CD4-positive, alpha-beta T cell (primary cell): ENCODE measurements at regions of chr15 and their contacts with region 1.

Region 1: DNA sequence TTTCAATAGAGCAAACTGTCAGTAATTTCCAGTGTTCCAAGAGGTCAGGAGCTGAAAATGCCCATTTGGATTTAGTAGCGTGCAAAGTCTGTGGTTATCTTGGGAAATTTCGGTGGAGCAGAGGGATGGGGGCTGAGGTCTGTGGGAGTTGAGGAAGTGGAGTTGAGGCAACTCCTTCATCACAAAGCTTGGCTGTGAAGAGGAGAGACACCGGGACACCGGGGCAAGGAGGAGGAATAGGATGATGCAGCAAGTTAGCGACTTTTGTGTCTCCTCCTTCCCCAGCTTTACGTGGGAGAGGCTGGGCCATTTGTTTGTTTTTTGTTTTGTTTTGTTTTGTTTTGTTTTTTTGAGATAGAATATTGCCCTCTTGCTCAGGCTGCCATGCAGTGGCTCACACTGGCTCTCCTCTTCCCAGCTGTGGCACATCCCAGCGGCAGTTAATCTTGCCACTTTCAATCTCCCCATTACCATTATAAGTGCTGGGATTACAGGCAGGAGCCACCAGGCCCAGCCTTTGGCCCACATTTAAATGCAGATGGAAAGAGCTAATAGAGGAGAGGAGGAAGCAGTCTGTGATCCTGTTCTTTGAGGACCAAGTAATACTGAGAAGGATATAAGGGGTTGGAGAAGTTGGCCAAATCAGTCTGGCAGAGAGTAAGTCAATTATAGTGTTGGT is 47.1 kb downstream of the CRTC3 start:
- DNase-seq: no peak
- ATAC-seq: no peak
- H3K4me3 ChIP-seq: no peak overlapping the region
- H3K4me3 Mint-ChIP-seq: no peak overlapping the region
- H3K27ac ChIP-seq: no peak overlapping the region
- H3K27ac Mint-ChIP-seq: peak overlapping the region; percentile 77
- H3K4me1 ChIP-seq: peaks cover 61% of the 10 kb centered on the region
- H3K4me1 Mint-ChIP-seq: peaks cover 80% of the 10 kb centered on the region
- H3K27me3 ChIP-seq: no peaks in the 10 kb centered on the region
- H3K27me3 Mint-ChIP-seq: no peaks in the 10 kb centered on the region
- CTCF ChIP-seq: no peak

Region 2: DNA sequence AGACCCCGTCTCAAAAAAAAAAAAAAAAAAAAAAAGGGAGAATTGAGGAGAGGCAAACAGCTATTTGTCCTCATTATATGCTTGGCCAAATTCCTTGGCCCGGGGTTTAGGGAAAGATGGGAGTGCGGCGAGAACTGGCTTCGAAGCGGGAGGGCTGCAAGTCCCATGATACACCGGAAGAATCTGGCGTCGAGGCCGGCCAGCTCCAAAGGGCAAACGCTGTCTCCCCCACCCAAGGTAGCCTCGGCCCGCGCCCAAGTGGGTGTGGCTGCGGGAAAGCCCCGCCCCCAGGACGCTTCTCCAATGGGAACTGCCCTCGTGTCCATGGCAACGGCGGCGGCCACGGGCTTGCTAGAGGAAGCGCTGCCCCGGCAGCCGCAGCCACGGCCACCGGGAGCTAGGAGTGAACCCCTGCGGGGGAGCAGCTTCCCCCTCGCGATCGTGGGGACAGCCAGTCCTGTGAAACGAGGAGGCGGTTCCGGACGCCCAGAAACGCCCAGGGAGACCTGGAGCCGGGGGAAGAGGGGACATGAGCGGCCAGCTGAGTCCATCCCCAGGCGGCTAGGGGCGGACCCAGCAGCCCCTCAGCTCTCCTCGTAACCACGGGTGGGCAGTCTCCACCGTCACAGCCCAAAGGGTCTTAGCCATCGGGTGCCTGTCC is 327.5 kb before region 1 on chr15 and contains the start of gene TTLL13:
- CTCF ChIA-PET with region 1: no interaction called
- POLR2A ChIA-PET with region 1: no interaction called
- intact Hi-C with region 1: no loop called
- DNase-seq: peak; percentile 33 to 87 (median 60)
- ATAC-seq: peak; percentile 70
- H3K4me3 ChIP-seq: peak within 1 kb of the TSS; percentile 61
- H3K4me3 Mint-ChIP-seq: peak within 1 kb of the TSS; percentile 76
- H3K27ac ChIP-seq: no peak within 1 kb of the TSS
- H3K27ac Mint-ChIP-seq: peak within 1 kb of the TSS; percentile 63
- H3K4me1 ChIP-seq: peaks cover 19% of the 10 kb centered on the region
- H3K4me1 Mint-ChIP-seq: peaks cover 17% of the 10 kb centered on the region
- H3K27me3 ChIP-seq: no peaks in the 10 kb centered on the region
- H3K27me3 Mint-ChIP-seq: no peaks in the 10 kb centered on the region
- CTCF ChIP-seq: no peak
- total RNA-seq, gene TTLL13: 0.63 to 1.8 TPM

Region 3: DNA sequence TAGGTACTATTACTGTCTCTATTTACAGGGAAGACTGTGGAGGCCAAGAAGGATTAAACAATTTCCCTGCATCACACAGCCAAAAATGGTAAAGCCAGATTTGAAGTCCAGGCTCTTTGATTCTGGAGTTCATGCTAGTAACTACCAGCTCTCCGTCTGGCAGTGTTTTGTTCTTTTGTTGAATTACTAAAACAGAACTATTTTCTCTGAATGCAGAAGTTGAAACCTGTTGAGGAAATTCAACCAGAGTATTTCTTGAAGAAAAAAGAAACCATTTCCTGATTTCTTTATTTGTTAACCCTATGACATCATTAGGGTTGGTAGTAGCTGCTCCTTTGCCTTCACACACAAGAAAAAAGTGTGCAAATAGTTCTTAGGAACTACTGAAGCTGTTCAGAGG is 12.8 kb before region 1 on chr15:
- CTCF ChIA-PET with region 1: interaction called, 7 read pairs
- POLR2A ChIA-PET with region 1: interaction called, 39 read pairs
- intact Hi-C with region 1: loop called in 1 of 2 experiments (anchors 2 kb)
- DNase-seq: peak in 3 of 14 experiments; percentile 58 to 63 (median 61)
- ATAC-seq: peak; percentile 38
- H3K4me3 ChIP-seq: no peak overlapping the region
- H3K4me3 Mint-ChIP-seq: peak overlapping the region; percentile 85
- H3K27ac ChIP-seq: peak overlapping the region; percentile 62 to 68
- H3K27ac Mint-ChIP-seq: peak overlapping the region; percentile 93
- H3K4me1 ChIP-seq: peaks cover 79% of the 10 kb centered on the region
- H3K4me1 Mint-ChIP-seq: peaks cover 87% of the 10 kb centered on the region
- H3K27me3 ChIP-seq: no peaks in the 10 kb centered on the region
- H3K27me3 Mint-ChIP-seq: no peaks in the 10 kb centered on the region
- CTCF ChIP-seq: no peak

Region 4: GRCh38 chr15:90591524-90591923 is 14.7 kb after region 1 on chr15:
- CTCF ChIA-PET with region 1: interaction called, 3 read pairs
- POLR2A ChIA-PET with region 1: interaction called, 17 read pairs
- intact Hi-C with region 1: loop called (anchors 1 to 2 kb)
- DNase-seq: no peak
- ATAC-seq: no peak
- H3K4me3 ChIP-seq: no peak overlapping the region
- H3K4me3 Mint-ChIP-seq: no peak overlapping the region
- H3K27ac ChIP-seq: peak overlapping the region in 1 of 2 donors; percentile 25
- H3K27ac Mint-ChIP-seq: peak overlapping the region; percentile 98
- H3K4me1 ChIP-seq: peaks cover 69% of the 10 kb centered on the region
- H3K4me1 Mint-ChIP-seq: peaks cover 73% of the 10 kb centered on the region
- H3K27me3 ChIP-seq: no peaks in the 10 kb centered on the region
- H3K27me3 Mint-ChIP-seq: no peaks in the 10 kb centered on the region
- CTCF ChIP-seq: no peak

Region 5: DNA sequence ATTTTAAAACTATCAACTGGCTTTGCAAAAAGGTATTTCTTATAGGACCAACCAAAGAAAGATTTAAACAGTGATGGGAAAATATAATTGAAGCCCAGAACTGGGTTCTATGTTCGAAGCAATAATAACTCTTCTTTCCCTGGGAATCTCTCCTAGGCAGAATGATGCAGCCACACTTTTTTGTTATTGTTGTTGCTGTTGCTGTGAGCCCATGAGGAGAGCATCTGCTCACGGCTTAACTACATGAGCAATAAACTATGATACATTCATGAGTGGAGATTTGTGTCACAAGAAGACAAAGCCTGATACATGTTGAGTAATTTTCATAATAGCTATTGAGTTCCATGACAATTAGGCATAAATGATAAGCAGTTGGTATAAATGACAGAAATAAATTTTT is 33.3 kb after region 1 on chr15:
- CTCF ChIA-PET with region 1: no interaction called
- POLR2A ChIA-PET with region 1: no interaction called
- intact Hi-C with region 1: loop called in 1 of 2 experiments (anchors 5 kb)
- DNase-seq: no peak
- ATAC-seq: no peak
- H3K4me3 ChIP-seq: no peak overlapping the region
- H3K4me3 Mint-ChIP-seq: no peak overlapping the region
- H3K27ac ChIP-seq: no peak overlapping the region
- H3K27ac Mint-ChIP-seq: no peak overlapping the region
- H3K4me1 ChIP-seq: no peaks in the 10 kb centered on the region
- H3K4me1 Mint-ChIP-seq: peaks cover 33% of the 10 kb centered on the region
- H3K27me3 ChIP-seq: no peaks in the 10 kb centered on the region
- H3K27me3 Mint-ChIP-seq: no peaks in the 10 kb centered on the region
- CTCF ChIP-seq: no peak

Region 6: GRCh38 chr15:91921188-91921842 is 1344.5 kb after region 1 on chr15:
- CTCF ChIA-PET with region 1: no interaction called
- POLR2A ChIA-PET with region 1: no interaction called
- intact Hi-C with region 1: no loop called
- DNase-seq: peak in 3 of 14 experiments; percentile 59 to 76 (median 69)
- ATAC-seq: peak; percentile 76
- H3K4me3 ChIP-seq: no peak overlapping the region
- H3K4me3 Mint-ChIP-seq: peak overlapping the region; percentile 18
- H3K27ac ChIP-seq: peak overlapping the region in 1 of 2 donors; percentile 55
- H3K27ac Mint-ChIP-seq: no peak overlapping the region
- H3K4me1 ChIP-seq: peaks cover 32% of the 10 kb centered on the region
- H3K4me1 Mint-ChIP-seq: peaks cover 67% of the 10 kb centered on the region
- H3K27me3 ChIP-seq: no peaks in the 10 kb centered on the region
- H3K27me3 Mint-ChIP-seq: no peaks in the 10 kb centered on the region
- CTCF ChIP-seq: no peak